CD8-positive, alpha-beta T cell (primary cell): ENCODE measurements at regions of chr12 and their contacts with region 1.

Region 1: DNA sequence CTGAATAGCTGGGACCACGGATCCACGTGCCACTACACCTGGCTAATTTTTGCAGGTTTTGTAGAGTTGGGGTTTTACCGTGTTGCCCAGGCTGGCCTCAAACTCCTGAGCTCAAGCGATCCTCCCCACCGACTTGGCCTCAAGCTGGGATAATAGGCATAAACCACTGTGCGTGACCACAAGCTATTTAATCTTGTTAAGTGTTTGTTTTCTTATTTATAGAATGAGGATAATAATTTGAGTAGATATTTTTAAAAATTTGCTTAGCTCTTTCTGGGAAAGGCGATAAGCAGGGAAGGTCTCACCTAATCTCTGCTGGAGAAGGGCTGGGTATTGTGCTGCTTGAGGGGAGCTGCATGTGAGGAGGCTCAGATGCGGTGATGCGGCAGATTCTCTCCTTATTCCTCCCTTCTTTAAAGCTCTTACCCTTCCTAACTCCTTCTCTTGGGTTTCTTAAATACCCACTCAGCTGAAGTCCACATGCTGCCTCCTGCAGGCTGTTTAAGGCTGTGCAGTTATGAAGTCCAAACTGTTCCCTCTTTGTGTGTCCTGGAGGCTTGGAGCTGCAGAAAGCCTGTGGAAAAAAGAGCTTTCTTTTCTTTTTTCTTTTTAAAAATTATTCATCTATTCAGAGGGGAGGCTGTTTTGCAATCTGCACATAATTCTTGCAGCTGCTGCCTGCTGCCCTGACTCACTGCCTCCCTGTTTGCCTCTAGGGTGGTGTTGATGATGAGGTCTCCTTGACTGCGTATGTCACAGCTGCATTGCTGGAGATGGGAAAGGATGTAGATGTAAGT is 37.9 kb downstream of the A2ML1 start:
- DNase-seq: peak in 8 of 9 experiments; percentile 10 to 64 (median 29)
- ATAC-seq: peak; percentile 51
- H3K4me3 ChIP-seq: no peak overlapping the region
- H3K4me3 Mint-ChIP-seq: no peak overlapping the region
- H3K27ac ChIP-seq: no peak overlapping the region
- H3K27ac Mint-ChIP-seq: no peak overlapping the region
- H3K4me1 ChIP-seq: no peaks in the 10 kb centered on the region
- H3K4me1 Mint-ChIP-seq: no peaks in the 10 kb centered on the region
- H3K27me3 ChIP-seq: no peaks in the 10 kb centered on the region
- H3K27me3 Mint-ChIP-seq: no peaks in the 10 kb centered on the region
- CTCF ChIP-seq: peak; percentile 53

Region 2: GRCh38 chr12:8662593-8662992 is 197.8 kb before region 1 on chr12 and contains the start of gene MFAP5:
- CTCF ChIA-PET with region 1: interaction called, 5 read pairs
- POLR2A ChIA-PET with region 1: no interaction called
- intact Hi-C with region 1: loop called in 1 of 2 experiments (anchors 1 kb)
- DNase-seq: no peak
- ATAC-seq: no peak
- H3K4me3 ChIP-seq: no peak within 1 kb of the TSS
- H3K4me3 Mint-ChIP-seq: no peak within 1 kb of the TSS
- H3K27ac ChIP-seq: no peak within 1 kb of the TSS
- H3K27ac Mint-ChIP-seq: no peak within 1 kb of the TSS
- H3K4me1 ChIP-seq: no peaks in the 10 kb centered on the region
- H3K4me1 Mint-ChIP-seq: no peaks in the 10 kb centered on the region
- H3K27me3 ChIP-seq: no peaks in the 10 kb centered on the region
- H3K27me3 Mint-ChIP-seq: peaks cover 7% of the 10 kb centered on the region
- CTCF ChIP-seq: no peak
- total RNA-seq, gene MFAP5: not detected

Region 3: GRCh38 chr12:8681041-8681902 is 179.1 kb before region 1 on chr12:
- CTCF ChIA-PET with region 1: interaction called, 30 read pairs
- POLR2A ChIA-PET with region 1: interaction called, 4 read pairs
- intact Hi-C with region 1: loop called in 1 of 2 experiments (anchors 1 kb)
- DNase-seq: no peak
- ATAC-seq: no peak
- H3K4me3 ChIP-seq: no peak overlapping the region
- H3K4me3 Mint-ChIP-seq: no peak overlapping the region
- H3K27ac ChIP-seq: no peak overlapping the region
- H3K27ac Mint-ChIP-seq: no peak overlapping the region
- H3K4me1 ChIP-seq: no peaks in the 10 kb centered on the region
- H3K4me1 Mint-ChIP-seq: peaks cover 10% of the 10 kb centered on the region
- H3K27me3 ChIP-seq: no peaks in the 10 kb centered on the region
- H3K27me3 Mint-ChIP-seq: peaks cover 2% of the 10 kb centered on the region
- CTCF ChIP-seq: no peak

Region 4: DNA sequence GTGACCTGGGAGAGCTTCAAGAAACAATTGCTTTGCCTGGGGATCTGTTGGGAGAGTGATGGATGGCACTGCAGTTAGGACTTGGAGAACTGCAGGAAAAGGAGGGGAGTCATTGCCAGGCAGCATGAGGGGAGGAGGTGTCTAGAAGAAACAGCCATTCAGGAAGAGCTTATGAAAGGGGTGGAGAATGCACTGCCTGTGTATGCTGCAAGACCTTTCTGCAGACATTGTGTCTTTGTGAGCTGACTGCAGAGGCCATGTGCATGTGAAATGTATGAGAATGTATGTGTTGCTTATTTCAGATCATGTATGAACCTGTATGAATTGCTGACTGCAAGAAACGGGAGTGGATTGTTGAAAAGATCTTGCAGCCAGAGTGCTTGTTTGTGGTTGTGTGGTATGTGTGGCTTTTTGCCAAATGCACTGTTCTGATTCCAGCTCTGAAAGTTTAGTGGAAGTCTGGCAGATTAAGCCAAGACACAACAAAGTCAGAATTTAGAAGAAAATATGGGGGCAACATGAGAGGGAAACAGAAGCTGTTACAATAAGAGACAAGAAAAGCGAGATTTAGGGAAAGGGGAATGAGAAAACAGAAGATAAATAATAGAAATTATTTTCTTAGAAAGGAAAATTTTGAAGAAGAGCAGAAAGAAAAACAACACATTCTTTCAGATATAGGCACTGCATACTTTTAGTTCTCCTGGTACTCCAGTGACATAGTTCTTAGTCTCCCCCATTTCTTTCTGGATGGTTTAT is 172.3 kb before region 1 on chr12:
- CTCF ChIA-PET with region 1: interaction called, 30 read pairs
- POLR2A ChIA-PET with region 1: no interaction called
- intact Hi-C with region 1: no loop called
- DNase-seq: peak in 2 of 9 experiments; percentile 7 to 29
- ATAC-seq: no peak
- H3K4me3 ChIP-seq: no peak overlapping the region
- H3K4me3 Mint-ChIP-seq: no peak overlapping the region
- H3K27ac ChIP-seq: no peak overlapping the region
- H3K27ac Mint-ChIP-seq: no peak overlapping the region
- H3K4me1 ChIP-seq: peaks cover 7% of the 10 kb centered on the region
- H3K4me1 Mint-ChIP-seq: peaks cover 8% of the 10 kb centered on the region
- H3K27me3 ChIP-seq: no peaks in the 10 kb centered on the region
- H3K27me3 Mint-ChIP-seq: no peaks in the 10 kb centered on the region
- CTCF ChIP-seq: no peak

Region 5: GRCh38 chr12:9024512-9024911 is 164.1 kb after region 1 on chr12:
- CTCF ChIA-PET with region 1: no interaction called
- POLR2A ChIA-PET with region 1: no interaction called
- intact Hi-C with region 1: no loop called
- DNase-seq: peak in 1 of 9 experiments; percentile 23
- ATAC-seq: peak; percentile 12
- H3K4me3 ChIP-seq: peak overlapping the region in 1 of 2 experiments; percentile 6
- H3K4me3 Mint-ChIP-seq: no peak overlapping the region
- H3K27ac ChIP-seq: peak overlapping the region; percentile 49 to 86
- H3K27ac Mint-ChIP-seq: no peak overlapping the region
- H3K4me1 ChIP-seq: peaks cover 67% of the 10 kb centered on the region
- H3K4me1 Mint-ChIP-seq: peaks cover 37% of the 10 kb centered on the region
- H3K27me3 ChIP-seq: no peaks in the 10 kb centered on the region
- H3K27me3 Mint-ChIP-seq: no peaks in the 10 kb centered on the region
- CTCF ChIP-seq: no peak

Region 6: GRCh38 chr12:9184276-9184675 is 323.9 kb after region 1 on chr12:
- CTCF ChIA-PET with region 1: no interaction called
- POLR2A ChIA-PET with region 1: no interaction called
- intact Hi-C with region 1: no loop called
- DNase-seq: no peak
- ATAC-seq: no peak
- H3K4me3 ChIP-seq: no peak overlapping the region
- H3K4me3 Mint-ChIP-seq: no peak overlapping the region
- H3K27ac ChIP-seq: no peak overlapping the region
- H3K27ac Mint-ChIP-seq: no peak overlapping the region
- H3K4me1 ChIP-seq: no peaks in the 10 kb centered on the region
- H3K4me1 Mint-ChIP-seq: peaks cover 2% of the 10 kb centered on the region
- H3K27me3 ChIP-seq: no peaks in the 10 kb centered on the region
- H3K27me3 Mint-ChIP-seq: no peaks in the 10 kb centered on the region
- CTCF ChIP-seq: no peak

Region 7: DNA sequence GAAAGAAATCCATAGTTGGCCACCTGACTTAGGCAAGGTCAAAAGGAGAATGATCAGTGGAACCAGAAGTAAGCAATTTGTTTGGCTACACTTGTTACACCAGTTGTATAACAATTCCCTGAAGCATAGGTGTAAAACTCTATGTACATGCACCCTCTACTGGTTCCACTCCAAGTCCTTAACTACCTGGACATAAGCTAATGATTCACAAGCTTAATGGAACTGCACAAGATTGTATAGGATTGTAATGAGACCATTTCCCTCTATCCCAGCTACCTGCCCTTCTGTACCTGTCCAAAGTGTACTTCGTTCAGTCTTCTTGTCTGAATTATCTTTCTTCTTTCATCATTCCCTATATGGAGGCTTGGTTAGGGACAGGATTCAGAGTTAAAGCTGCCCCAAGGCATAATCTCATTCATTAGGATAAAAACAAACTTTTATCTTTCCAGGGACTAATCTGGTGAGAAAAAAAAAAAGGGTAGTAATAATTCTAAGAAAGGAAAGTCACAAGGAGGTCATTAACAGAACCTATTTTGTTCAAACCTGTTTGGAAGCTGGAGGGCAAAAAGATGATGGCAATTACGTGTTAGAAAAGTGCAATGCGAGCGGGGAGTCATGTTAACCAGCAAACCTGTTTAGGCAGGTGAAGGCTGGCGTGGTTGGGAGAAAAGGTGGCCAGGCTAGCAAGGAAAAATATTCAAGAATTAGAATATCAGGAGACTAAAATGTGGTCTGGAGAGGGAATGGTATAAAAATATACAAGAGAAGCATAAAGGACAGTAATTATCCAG is 1315.7 kb after region 1 on chr12:
- CTCF ChIA-PET with region 1: no interaction called
- POLR2A ChIA-PET with region 1: no interaction called
- intact Hi-C with region 1: no loop called
- DNase-seq: no peak
- ATAC-seq: no peak
- H3K4me3 ChIP-seq: no peak overlapping the region
- H3K4me3 Mint-ChIP-seq: no peak overlapping the region
- H3K27ac ChIP-seq: no peak overlapping the region
- H3K27ac Mint-ChIP-seq: no peak overlapping the region
- H3K4me1 ChIP-seq: no peaks in the 10 kb centered on the region
- H3K4me1 Mint-ChIP-seq: no peaks in the 10 kb centered on the region
- H3K27me3 ChIP-seq: no peaks in the 10 kb centered on the region
- H3K27me3 Mint-ChIP-seq: peaks cover 26% of the 10 kb centered on the region
- CTCF ChIP-seq: no peak